Calu3 (cell line): ENCODE measurements at regions of chr19 and their contacts with region 1.

Region 1: GRCh38 chr19:57279418-57280066 is 743 bp upstream of the ZNF460 start:
- DNase-seq: peak; percentile 90
- H3K4me3 Mint-ChIP-seq: no peak overlapping the region
- H3K27ac Mint-ChIP-seq: no peak overlapping the region
- H3K4me1 Mint-ChIP-seq: peaks cover 12% of the 10 kb centered on the region
- H3K27me3 Mint-ChIP-seq: no peaks in the 10 kb centered on the region
- CTCF ChIP-seq: no peak

Region 2: GRCh38 chr19:57240311-57241090 is 39.0 kb before region 1 on chr19 and contains the start of gene ZNF805:
- CTCF ChIA-PET with region 1: no interaction called
- intact Hi-C with region 1: loop called (anchors 2 kb)
- DNase-seq: peak; percentile 97
- H3K4me3 Mint-ChIP-seq: peak within 1 kb of the TSS; percentile 70
- H3K27ac Mint-ChIP-seq: peak within 1 kb of the TSS; percentile 56
- H3K4me1 Mint-ChIP-seq: peaks cover 8% of the 10 kb centered on the region
- H3K27me3 Mint-ChIP-seq: no peaks in the 10 kb centered on the region
- CTCF ChIP-seq: no peak
- total RNA-seq, gene ZNF805: 13.8 and 14.1 TPM in 2 replicates

Region 3: GRCh38 chr19:57465495-57466395 is 186.2 kb after region 1 on chr19:
- CTCF ChIA-PET with region 1: interaction called, 11 read pairs
- intact Hi-C with region 1: no loop called
- DNase-seq: peak; percentile 17
- H3K4me3 Mint-ChIP-seq: no peak overlapping the region
- H3K27ac Mint-ChIP-seq: no peak overlapping the region
- H3K4me1 Mint-ChIP-seq: no peaks in the 10 kb centered on the region
- H3K27me3 Mint-ChIP-seq: no peaks in the 10 kb centered on the region
- CTCF ChIP-seq: peak; percentile 32